MCF 10A (cell line): ENCODE measurements at regions of chr19 and their contacts with region 1.

Region 1: GRCh38 chr19:16778796-16779411 is 50.3 kb upstream of the SIN3B start:
- DNase-seq: peak; percentile 78
- H3K4me3 Mint-ChIP-seq: no peak overlapping the region
- H3K27ac Mint-ChIP-seq: no peak overlapping the region
- H3K4me1 Mint-ChIP-seq: no peaks in the 10 kb centered on the region
- H3K27me3 Mint-ChIP-seq: no peaks in the 10 kb centered on the region
- CTCF ChIP-seq: peak; percentile 70

Region 2: GRCh38 chr19:16795721-16796120 is 16.8 kb after region 1 on chr19:
- CTCF ChIA-PET with region 1: no interaction called
- POLR2A ChIA-PET with region 1: no interaction called
- intact Hi-C with region 1: no loop called
- DNase-seq: peak; percentile 3
- H3K4me3 Mint-ChIP-seq: no peak overlapping the region
- H3K27ac Mint-ChIP-seq: no peak overlapping the region
- H3K4me1 Mint-ChIP-seq: no peaks in the 10 kb centered on the region
- H3K27me3 Mint-ChIP-seq: no peaks in the 10 kb centered on the region
- CTCF ChIP-seq: no peak

Region 3: GRCh38 chr19:16829010-16829821 is 50.3 kb after region 1 on chr19 and contains the start of gene SIN3B:
- CTCF ChIA-PET with region 1: interaction called, 4 read pairs
- POLR2A ChIA-PET with region 1: no interaction called
- intact Hi-C with region 1: loop called (anchors 1 kb)
- DNase-seq: peak; percentile 94
- H3K4me3 Mint-ChIP-seq: peak within 1 kb of the TSS; percentile 75
- H3K27ac Mint-ChIP-seq: peak within 1 kb of the TSS; percentile 59
- H3K4me1 Mint-ChIP-seq: peaks cover 17% of the 10 kb centered on the region
- H3K27me3 Mint-ChIP-seq: no peaks in the 10 kb centered on the region
- CTCF ChIP-seq: no peak
- total RNA-seq, gene SIN3B: 56.0 and 66.6 TPM in 2 replicates

Region 4: DNA sequence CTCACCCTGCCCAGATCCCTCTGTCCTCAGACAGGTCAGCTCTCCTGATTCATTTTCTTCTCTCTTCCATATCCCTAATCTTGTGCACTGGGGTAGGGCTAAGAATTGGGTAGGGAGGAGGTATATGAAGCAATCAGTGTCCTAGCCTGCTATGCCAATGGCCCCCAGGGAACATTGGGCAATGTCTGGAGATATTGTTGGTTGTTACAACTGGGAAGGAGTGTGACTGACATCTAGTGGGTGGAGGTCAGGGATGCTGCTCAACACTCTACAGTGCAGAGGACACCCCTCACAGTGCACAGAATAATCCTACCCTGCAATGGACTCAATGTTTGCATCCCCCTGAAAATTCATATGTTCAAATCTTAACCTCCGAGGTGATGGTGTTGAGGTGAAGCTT is 190.2 kb after region 1 on chr19:
- CTCF ChIA-PET with region 1: interaction called, 17 read pairs
- POLR2A ChIA-PET with region 1: no interaction called
- intact Hi-C with region 1: loop called (anchors 2 kb)
- DNase-seq: peak; percentile 89
- H3K4me3 Mint-ChIP-seq: no peak overlapping the region
- H3K27ac Mint-ChIP-seq: no peak overlapping the region
- H3K4me1 Mint-ChIP-seq: no peaks in the 10 kb centered on the region
- H3K27me3 Mint-ChIP-seq: peaks cover 11% of the 10 kb centered on the region
- CTCF ChIP-seq: peak; percentile 9

Region 5: GRCh38 chr19:16985403-16985802 is 206.5 kb after region 1 on chr19:
- CTCF ChIA-PET with region 1: no interaction called
- POLR2A ChIA-PET with region 1: no interaction called
- intact Hi-C with region 1: no loop called
- DNase-seq: no peak
- H3K4me3 Mint-ChIP-seq: no peak overlapping the region
- H3K27ac Mint-ChIP-seq: no peak overlapping the region
- H3K4me1 Mint-ChIP-seq: no peaks in the 10 kb centered on the region
- H3K27me3 Mint-ChIP-seq: peaks cover 21% of the 10 kb centered on the region
- CTCF ChIP-seq: no peak

Region 6: GRCh38 chr19:17052439-17053210 is 273.7 kb after region 1 on chr19:
- CTCF ChIA-PET with region 1: interaction called, 19 read pairs
- POLR2A ChIA-PET with region 1: no interaction called
- intact Hi-C with region 1: loop called (anchors 1 kb)
- DNase-seq: peak; percentile 63
- H3K4me3 Mint-ChIP-seq: no peak overlapping the region
- H3K27ac Mint-ChIP-seq: no peak overlapping the region
- H3K4me1 Mint-ChIP-seq: no peaks in the 10 kb centered on the region
- H3K27me3 Mint-ChIP-seq: no peaks in the 10 kb centered on the region
- CTCF ChIP-seq: peak; percentile 65